CD14-positive monocyte (primary cell): ENCODE measurements at regions of chr16 and their contacts with region 1.

Region 1: DNA sequence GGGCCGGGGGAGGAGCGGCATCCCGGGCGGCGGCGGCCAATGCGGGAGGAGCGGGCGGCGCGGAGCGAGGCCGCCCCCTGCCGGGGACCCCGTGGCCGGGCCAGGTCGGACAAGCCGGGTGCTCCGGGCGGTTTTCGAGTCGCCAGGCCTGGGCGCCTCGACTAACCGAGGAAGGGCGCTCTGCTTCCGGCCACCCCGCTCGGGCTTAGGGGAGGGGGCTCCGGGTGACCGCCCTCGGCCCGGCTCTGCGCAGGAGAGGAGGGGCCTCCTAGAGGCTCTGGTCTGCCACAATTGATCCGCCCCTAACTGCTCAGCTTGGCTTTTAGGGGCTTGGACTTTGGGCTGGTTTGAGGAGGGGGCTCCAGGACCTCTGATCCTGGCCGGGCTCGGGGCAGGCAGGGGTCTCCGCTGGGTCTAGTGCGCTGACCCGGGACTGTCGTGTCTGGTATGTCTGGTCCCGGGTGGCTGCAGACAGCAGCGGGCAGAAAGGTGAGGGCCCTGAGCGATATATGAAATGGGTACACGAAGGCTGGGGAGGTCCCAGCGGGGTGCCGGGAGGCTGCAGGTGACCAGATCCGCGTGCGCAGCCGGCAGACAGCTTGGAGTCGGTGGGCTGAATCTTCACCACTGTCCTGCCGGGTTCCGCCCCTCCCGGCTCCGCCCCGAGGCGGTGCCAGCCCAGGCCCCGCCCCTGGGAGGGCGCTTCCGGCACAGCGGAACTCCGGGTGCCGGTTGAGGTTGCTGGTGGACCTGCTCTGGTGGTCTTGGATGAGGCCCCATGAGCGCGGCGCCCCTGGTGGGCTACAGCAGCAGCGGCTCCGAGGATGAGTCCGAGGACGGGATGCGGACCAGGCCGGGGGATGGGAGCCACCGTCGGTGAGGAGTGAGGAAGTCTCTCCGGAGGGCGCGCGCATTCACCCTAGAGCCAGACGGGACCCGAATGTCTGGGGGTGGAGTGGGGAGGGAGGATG is at the start of gene USB1:
- DNase-seq: peak; percentile 70 to 77 (median 74)
- H3K4me3 ChIP-seq: peak within 1 kb of the TSS; percentile 84 to 98 (median 96)
- H3K4me3 Mint-ChIP-seq: peak within 1 kb of the TSS; percentile 92 to 95
- H3K27ac ChIP-seq: peak within 1 kb of the TSS; percentile 92 to 95
- H3K27ac Mint-ChIP-seq: peak within 1 kb of the TSS; percentile 90 to 97 (median 94)
- H3K4me1 ChIP-seq: peaks cover 39 to 48% of the 10 kb centered on the region in 2 donors
- H3K4me1 Mint-ChIP-seq: peaks cover 52% of the 10 kb centered on the region
- H3K27me3 ChIP-seq: no peaks in the 10 kb centered on the region
- H3K27me3 Mint-ChIP-seq: no peaks in the 10 kb centered on the region
- CTCF ChIP-seq: peak; percentile 81
- polyA plus RNA-seq, gene USB1: 25.7 to 55.7 (median 44.4) TPM

Region 2: DNA sequence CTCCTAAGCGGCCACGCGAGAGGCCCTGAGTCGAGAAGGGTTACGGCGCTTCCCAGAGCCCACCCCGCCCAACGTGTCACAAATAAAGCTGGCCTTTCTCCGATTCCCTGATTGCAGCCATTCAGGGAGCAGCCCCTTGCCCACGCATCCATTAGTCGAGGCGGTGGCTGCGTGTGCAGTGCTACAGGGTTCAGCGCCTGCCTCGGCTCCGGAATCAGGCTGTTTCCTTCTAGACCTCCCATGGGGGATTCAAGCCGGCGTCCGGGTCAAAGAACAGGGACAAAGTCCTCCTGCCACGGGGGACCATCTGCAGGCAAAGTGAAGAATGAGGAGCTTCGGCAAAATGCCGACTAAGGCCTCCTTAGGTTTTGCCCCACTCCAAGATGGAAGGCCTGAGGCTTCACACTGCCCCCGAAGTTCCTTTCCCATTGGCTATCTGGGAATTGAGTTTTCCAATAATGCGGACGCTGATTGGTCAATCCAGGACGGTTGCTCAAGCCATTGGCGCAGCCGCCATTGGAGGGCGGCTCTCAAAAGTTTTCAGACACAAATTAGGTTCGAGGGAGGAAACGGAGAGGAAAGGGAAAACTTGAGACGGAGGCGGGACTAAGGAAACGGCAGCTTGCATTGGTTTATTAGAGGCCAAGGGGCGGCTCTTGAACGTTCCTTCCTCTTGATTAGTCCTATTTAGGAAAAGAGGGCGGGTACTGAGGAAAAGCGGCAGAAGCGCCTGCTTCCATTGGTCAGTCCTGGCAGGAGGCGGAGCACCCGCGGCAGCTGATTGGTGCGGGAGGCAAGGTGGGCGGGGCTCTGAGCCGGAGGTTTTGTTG is 265.9 kb before region 1 on chr16:
- intact Hi-C with region 1: loop called in 1 of 2 experiments (anchors 5 kb)
- DNase-seq: peak; percentile 99 to 100 (median 100)
- H3K4me3 ChIP-seq: peak overlapping the region; percentile 84 to 93 (median 91)
- H3K4me3 Mint-ChIP-seq: peak overlapping the region; percentile 96 to 99
- H3K27ac ChIP-seq: peak overlapping the region; percentile 41 to 88
- H3K27ac Mint-ChIP-seq: peak overlapping the region; percentile 87 to 98 (median 95)
- H3K4me1 ChIP-seq: peaks cover 22 to 26% of the 10 kb centered on the region in 2 donors
- H3K4me1 Mint-ChIP-seq: peaks cover 21% of the 10 kb centered on the region
- H3K27me3 ChIP-seq: no peaks in the 10 kb centered on the region
- H3K27me3 Mint-ChIP-seq: peaks cover 0 to 3% (median 2%) of the 10 kb centered on the region in 3 donors
- CTCF ChIP-seq: no peak

Region 3: GRCh38 chr16:57802341-57803133 is 198.5 kb before region 1 on chr16 and contains the start of gene KIFC3:
- intact Hi-C with region 1: loop called (anchors 5 to 10 kb)
- DNase-seq: peak; percentile 61 to 79 (median 73)
- H3K4me3 ChIP-seq: peak within 1 kb of the TSS in 2 of 3 experiments; percentile 25 to 56
- H3K4me3 Mint-ChIP-seq: peak within 1 kb of the TSS; percentile 75 to 96
- H3K27ac ChIP-seq: no peak within 1 kb of the TSS
- H3K27ac Mint-ChIP-seq: peak within 1 kb of the TSS in 6 of 7 donors; percentile 32 to 84 (median 66)
- H3K4me1 ChIP-seq: peaks cover 36 to 40% of the 10 kb centered on the region in 2 donors
- H3K4me1 Mint-ChIP-seq: peaks cover 40% of the 10 kb centered on the region
- H3K27me3 ChIP-seq: peaks cover 23 to 55% of the 10 kb centered on the region in 2 donors
- H3K27me3 Mint-ChIP-seq: peaks cover 42 to 76% (median 63%) of the 10 kb centered on the region in 3 donors
- CTCF ChIP-seq: no peak
- polyA plus RNA-seq, gene KIFC3: 0.24 to 1.7 TPM in 2 of 3 donors, not detected in the other

Region 4: DNA sequence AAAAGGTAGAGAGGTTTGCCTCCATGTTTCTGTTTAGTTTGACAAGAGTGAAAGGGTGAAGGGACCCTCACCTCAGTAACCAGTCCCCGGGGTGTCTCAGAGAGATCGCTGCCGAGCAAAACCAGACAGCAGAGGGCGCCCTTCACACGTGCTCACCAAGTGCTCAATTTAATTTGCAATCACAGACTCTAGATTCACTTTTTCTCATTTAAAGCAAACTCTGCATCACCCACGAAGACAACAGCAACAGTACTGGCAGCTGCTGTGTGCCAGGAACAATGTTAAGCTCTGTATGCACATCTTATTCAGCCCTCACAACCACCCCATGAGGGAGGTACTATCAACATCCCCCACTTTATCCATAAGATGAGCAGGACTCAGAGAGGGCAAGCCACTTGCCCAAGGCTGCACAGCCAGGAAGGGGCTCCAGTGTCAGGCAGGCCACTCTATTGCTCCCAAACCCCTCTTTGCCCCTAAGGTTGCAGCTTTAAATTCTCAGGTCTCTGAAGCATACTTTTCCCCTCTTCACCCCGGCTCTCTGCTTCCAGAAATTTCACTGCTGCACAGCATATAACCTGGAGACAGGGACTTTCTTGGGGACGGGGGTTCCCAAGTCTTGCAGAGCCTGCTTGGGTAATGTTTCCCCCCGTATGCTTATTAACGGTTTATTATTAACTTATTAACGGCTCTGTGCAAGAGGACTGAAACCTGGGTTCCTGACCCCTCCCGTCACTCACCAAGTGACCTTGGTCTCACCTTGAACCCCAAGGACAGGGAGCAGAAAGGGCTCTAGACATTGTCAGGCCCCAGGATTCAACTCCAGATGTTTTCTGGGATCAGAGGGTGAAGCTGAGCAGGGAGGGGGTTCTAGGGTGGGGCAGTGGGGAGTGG is 101.0 kb before region 1 on chr16:
- intact Hi-C with region 1: loop called in 1 of 2 experiments (anchors 2 kb)
- DNase-seq: peak; percentile 50 to 66 (median 64)
- H3K4me3 ChIP-seq: no peak overlapping the region
- H3K4me3 Mint-ChIP-seq: no peak overlapping the region
- H3K27ac ChIP-seq: no peak overlapping the region
- H3K27ac Mint-ChIP-seq: peak overlapping the region in 2 of 7 donors; percentile 14 to 54
- H3K4me1 ChIP-seq: peaks cover under 1 to 2% of the 10 kb centered on the region in 2 donors
- H3K4me1 Mint-ChIP-seq: peaks cover 12% of the 10 kb centered on the region
- H3K27me3 ChIP-seq: no peaks in the 10 kb centered on the region
- H3K27me3 Mint-ChIP-seq: peaks cover 4 to 15% (median 9%) of the 10 kb centered on the region in 3 donors
- CTCF ChIP-seq: peak; percentile 92

Region 5: DNA sequence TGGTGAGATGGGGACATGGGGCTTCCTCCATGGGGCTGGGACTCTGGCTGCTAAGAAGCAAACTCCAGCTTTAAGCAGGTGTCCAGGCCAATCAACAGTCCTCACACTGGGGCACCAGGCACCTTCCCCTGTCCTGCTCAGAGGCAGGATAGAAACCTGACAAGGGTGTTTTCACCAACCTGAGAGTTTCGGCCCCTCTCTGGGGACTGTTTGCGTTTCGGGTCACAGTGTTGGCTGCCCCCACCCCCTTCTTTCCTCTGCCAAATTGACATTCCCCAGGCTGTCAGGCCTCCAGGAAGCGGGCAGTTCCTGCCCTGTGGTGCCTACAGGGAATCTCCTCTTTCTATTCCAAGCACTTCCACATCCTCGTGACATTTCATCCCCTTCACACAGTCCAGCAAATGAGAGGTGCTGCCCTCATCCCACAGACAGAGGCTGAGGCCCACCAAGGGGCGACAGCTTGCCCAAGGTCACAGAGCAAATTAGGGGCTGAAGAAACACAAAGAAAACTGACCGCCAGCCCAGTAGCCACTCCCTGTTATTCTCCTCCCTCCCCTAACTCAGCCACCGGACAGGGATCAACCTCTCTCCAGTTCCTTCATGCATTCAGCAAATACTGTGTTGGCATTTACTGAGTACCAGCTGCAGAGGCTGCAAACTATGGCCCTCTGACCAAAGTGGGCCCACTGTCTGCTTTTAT is 62.5 kb after region 1 on chr16:
- intact Hi-C with region 1: no loop called
- DNase-seq: no peak
- H3K4me3 ChIP-seq: no peak overlapping the region
- H3K4me3 Mint-ChIP-seq: no peak overlapping the region
- H3K27ac ChIP-seq: no peak overlapping the region
- H3K27ac Mint-ChIP-seq: peak overlapping the region in 1 of 7 donors; percentile 18
- H3K4me1 ChIP-seq: no peaks in the 10 kb centered on the region
- H3K4me1 Mint-ChIP-seq: no peaks in the 10 kb centered on the region
- H3K27me3 ChIP-seq: no peaks in the 10 kb centered on the region
- H3K27me3 Mint-ChIP-seq: peaks cover 0 to 2% (median 0%) of the 10 kb centered on the region in 3 donors
- CTCF ChIP-seq: no peak